Dorsolateral prefrontal cortex (tissue), 120 donors: ENCODE measurements at regions of chr11 and their contacts with region 1.

Region 1: DNA sequence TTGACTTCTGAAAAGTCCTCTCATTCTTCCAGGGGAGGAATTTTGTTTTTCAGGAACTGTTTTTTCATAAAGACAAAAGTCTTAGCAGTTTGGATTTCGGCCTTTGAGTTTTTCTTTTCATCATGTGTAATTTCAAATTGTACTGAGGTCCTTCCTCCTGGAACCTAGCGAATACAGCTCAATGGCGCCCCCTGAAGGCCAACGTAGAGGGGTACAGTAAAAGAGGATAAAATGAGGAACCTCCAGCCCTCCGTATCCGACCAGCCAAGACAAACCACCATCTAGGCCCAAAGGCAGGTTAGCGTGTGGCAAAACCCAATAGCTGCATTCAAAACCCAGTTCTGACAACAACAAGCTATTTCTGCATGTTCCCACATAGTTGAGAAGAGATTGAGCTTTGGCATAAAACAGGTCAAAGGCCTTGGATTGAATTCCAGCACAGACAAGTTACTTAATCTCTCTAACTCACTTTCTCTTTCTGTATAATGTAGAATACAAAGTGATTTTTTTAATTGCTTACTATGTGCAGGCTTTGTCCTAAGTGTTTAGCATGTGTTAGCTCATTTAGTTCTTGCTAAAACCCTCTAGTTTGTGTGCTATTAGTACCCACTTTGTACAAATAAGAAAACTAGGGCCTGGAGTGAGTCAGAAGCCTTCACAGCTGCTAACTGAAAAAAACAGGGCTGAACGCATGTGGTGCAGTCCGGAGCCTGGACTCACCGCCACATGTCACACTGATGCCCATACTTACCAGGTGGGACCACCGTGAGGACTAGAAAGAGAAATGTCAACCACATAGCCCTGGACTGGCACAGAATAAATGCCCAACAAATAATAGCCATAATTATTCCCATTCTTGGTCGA is 43.2 kb upstream of the ETS1 start:
- DNase-seq: peak; percentile 32 to 83 (median 73)
- H3K4me3 ChIP-seq: no peak overlapping the region
- H3K27ac ChIP-seq: peak overlapping the region in 1 of 59 donors; percentile 37
- H3K27me3 ChIP-seq: peaks cover 0 to 5% (median 0%) of the 10 kb centered on the region in 45 donors
- CTCF ChIP-seq: peak; percentile 74 to 96 (median 89)

Region 2: GRCh38 chr11:128157423-128158298 is 472.9 kb before region 1 on chr11:
- intact Hi-C with region 1: loop called in 1 of 2 experiments (anchors 5 kb)
- DNase-seq: peak in 1 of 10 donors; percentile 15
- H3K4me3 ChIP-seq: peak overlapping the region in 9 of 59 donors; percentile 4 to 31 (median 24)
- H3K27ac ChIP-seq: no peak overlapping the region
- H3K27me3 ChIP-seq: peaks cover 0 to 9% (median 0%) of the 10 kb centered on the region in 45 donors
- CTCF ChIP-seq: peak; percentile 72 to 98 (median 90)

Region 3: GRCh38 chr11:128172046-128172878 is 458.3 kb before region 1 on chr11:
- intact Hi-C with region 1: loop called (anchors 2 to 10 kb)
- DNase-seq: peak; percentile 59 to 89 (median 78)
- H3K4me3 ChIP-seq: no peak overlapping the region
- H3K27ac ChIP-seq: no peak overlapping the region
- H3K27me3 ChIP-seq: peaks cover 0 to 40% (median 2%) of the 10 kb centered on the region in 45 donors
- CTCF ChIP-seq: peak; percentile 74 to 99 (median 86)

Region 4: GRCh38 chr11:128290106-128290840 is 340.3 kb before region 1 on chr11:
- intact Hi-C with region 1: loop called (anchors 2 to 5 kb)
- DNase-seq: peak in 3 of 10 donors; percentile 36 to 52 (median 45)
- H3K4me3 ChIP-seq: peak overlapping the region in 12 of 59 donors; percentile 5 to 37 (median 28)
- H3K27ac ChIP-seq: no peak overlapping the region
- H3K27me3 ChIP-seq: peaks cover 0 to 32% (median 0%) of the 10 kb centered on the region in 45 donors
- CTCF ChIP-seq: peak; percentile 71 to 95 (median 88)

Region 5: DNA sequence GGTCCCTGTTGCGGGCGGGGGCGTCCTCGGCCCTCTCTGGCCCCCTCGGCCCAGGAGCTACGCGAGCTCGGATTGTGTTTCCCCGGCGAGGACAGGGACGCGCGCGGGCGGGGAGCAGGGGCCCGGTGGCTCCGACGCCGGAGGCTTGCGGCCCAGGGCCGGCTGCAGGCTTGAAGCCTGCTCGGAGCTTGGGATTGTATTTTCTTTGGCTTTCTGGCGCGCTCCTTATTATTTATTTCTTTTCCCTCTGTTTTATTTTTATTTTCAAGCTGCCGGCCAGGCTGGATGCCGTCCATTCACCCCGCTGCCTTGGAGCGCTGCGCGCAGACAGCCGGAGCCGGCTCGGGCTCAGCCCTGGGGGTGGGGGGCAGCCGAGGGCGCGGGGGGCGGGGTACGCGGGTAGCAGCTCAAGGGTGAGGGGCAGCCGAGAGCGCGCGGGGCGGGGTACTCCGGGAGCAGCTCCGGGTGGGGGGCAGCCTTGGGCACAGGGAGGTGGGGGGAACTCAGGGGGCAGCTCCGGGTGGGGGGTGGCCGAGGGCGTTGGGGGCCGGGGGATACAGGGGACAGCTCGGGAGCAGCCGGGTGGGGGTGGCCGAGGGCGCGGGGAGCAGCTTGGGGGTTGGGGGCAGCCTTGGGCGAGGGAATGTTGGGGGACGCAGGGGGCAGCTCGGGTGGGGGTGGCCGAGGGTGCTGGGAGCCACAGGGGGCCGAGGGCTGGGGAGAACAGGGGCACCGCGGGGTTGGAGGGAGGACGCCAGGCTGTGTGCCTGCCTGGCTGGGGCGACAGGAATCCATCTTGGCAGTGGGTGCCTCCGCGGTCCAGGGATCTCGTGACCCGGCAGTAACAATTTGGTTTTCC is 193.8 kb after region 1 on chr11:
- intact Hi-C with region 1: loop called in 1 of 2 experiments (anchors 10 kb)
- DNase-seq: no peak
- H3K4me3 ChIP-seq: peak overlapping the region in 29 of 59 donors; percentile 9 to 50 (median 34)
- H3K27ac ChIP-seq: no peak overlapping the region
- H3K27me3 ChIP-seq: peaks cover 0 to 28% (median 6%) of the 10 kb centered on the region in 45 donors
- CTCF ChIP-seq: no peak

Region 6: GRCh38 chr11:128831174-128832120 is 200.8 kb after region 1 on chr11:
- intact Hi-C with region 1: loop called (anchors 5 to 10 kb)
- DNase-seq: peak; percentile 66 to 88 (median 78)
- H3K4me3 ChIP-seq: peak overlapping the region in 12 of 59 donors; percentile 2 to 34 (median 26)
- H3K27ac ChIP-seq: no peak overlapping the region
- H3K27me3 ChIP-seq: peaks cover 0 to 28% (median 0%) of the 10 kb centered on the region in 45 donors
- CTCF ChIP-seq: peak; percentile 90 to 99 (median 96)

Region 7: GRCh38 chr11:128848815-128849455 is 218.3 kb after region 1 on chr11:
- intact Hi-C with region 1: loop called in 1 of 2 experiments (anchors 5 kb)
- DNase-seq: peak in 1 of 10 donors; percentile 21
- H3K4me3 ChIP-seq: no peak overlapping the region
- H3K27ac ChIP-seq: no peak overlapping the region
- H3K27me3 ChIP-seq: peaks cover 0 to 9% (median 0%) of the 10 kb centered on the region in 45 donors
- CTCF ChIP-seq: peak in 54 of 56 donors; percentile 25 to 63 (median 49)